ENCODE measurements at regions of chr18 and their contacts with region 1.

Region 1: DNA sequence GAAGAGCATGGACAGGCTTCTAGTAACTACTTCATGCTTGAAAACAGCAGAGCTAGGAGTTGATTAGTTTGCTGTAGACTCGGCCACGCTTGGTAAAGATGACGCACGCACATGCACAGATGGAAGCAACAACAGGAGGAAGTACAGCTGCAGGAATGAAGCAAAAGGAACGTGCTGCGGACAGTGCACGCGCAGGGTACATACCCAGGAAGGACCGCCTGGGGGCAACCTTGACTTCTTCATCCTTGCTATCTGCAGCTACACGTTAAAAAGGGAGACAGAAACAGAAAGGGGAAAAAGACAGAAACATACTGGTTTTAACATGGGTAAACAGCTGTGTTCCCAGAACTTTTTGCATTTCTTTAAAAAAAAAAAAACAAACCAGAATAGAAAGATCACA is 17.7 kb downstream of the SLC66A2 start:
- DNase-seq: peak in 1 of 2 donors; percentile 66
- H3K4me3 ChIP-seq: no peak overlapping the region
- CTCF ChIP-seq: no peak
- POLR2A ChIP-seq: no peak

Region 2: GRCh38 chr18:79625195-79625923 is 308.4 kb before region 1 on chr18:
- intact Hi-C with region 1: no loop called
- DNase-seq: peak in 1 of 2 donors; percentile 68
- H3K4me3 ChIP-seq: no peak overlapping the region
- CTCF ChIP-seq: no peak
- POLR2A ChIP-seq: no peak

Region 3: GRCh38 chr18:79790996-79791972 is 142.5 kb before region 1 on chr18:
- intact Hi-C with region 1: loop called (anchors 10 kb)
- DNase-seq: peak in 1 of 2 donors; percentile 45
- H3K4me3 ChIP-seq: no peak overlapping the region
- CTCF ChIP-seq: no peak
- POLR2A ChIP-seq: no peak

Region 4: DNA sequence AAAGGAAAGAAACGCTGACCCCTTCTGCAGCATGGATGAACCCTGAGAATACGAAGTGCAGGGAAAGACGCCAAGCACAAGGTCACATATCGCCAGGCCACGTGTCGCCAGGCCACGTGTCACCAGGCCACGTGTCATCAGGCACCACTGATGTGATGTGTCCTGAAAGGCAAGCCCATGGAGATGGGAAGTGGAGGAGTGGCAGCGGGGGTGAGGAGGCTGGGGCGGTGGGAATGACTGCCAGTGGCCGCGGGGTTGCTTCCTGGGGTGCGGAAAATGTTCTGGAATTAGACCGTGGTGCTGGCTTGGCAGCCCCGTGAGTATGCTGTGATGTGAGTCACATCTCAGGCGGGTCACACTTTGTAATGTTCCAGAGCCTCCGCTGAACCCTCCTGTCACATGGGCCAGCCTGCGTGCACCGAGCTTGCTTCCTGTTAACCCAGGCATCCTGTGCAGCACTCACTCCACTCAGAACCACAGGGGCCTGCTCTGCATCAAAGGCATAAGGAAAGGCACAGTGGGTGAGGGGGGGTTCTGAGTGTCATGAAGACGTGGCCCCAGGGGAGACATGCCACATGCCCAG is 21.3 kb before region 1 on chr18:
- intact Hi-C with region 1: no loop called
- DNase-seq: peak in 1 of 2 donors; percentile 84
- H3K4me3 ChIP-seq: no peak overlapping the region
- CTCF ChIP-seq: no peak
- POLR2A ChIP-seq: no peak

Measured in lower leg skin (tissue), 4 donors.